ENCODE measurements at regions of chrX and their contacts with region 1.

Region 1: DNA sequence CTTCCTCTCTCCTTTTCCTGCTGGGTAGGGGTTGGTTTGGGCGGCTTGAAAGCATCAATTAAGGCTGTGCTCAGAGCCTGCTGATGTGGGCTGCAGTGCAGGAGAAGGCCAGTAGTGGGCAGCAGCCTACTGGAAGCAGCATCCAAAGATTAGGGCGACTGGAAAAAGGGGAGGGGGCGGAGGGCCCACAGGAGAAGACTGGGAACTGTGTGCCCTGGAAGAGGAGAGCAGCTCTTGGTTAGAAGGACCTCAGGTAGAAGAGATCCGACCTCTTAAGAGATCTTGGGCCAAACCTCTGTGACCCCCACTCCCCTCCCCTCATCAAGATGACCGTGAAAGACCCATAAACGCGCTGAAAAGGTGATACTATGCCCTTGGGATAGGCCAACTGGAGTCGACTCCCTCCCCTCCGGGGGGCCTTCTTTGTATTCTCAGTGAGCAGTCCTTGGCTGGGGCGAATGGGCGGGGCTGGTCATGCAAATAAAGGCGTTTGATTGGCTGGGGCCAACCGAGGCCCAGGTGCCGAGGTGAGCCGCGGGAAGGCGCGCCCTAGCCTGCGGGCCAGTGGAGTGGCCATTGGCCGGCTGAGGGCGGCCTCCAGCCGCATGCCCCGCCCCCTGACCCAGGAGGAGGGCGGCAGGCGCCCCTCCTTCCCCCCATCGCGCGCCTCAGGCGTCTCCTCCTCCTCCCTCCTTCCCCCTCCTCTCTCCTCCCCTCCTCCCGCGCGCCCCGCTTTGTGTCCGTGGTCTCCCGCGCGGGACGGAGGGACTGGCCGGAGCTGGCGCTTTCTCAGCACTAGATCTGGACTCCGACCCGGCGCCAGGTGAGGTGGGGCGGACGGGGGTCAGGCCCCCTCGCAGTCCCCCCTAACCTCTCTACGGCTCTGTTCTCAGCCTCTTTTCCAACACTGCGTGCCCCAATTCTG is 10.1 kb downstream of the DLG3 start:
- H3K4me3 Mint-ChIP-seq: peak overlapping the region; percentile 32
- H3K27ac Mint-ChIP-seq: no peak overlapping the region
- H3K4me1 Mint-ChIP-seq: peaks cover 28% of the 10 kb centered on the region
- H3K27me3 Mint-ChIP-seq: peaks cover 72% of the 10 kb centered on the region

Region 2: GRCh38 chrX:69506617-69507499 is 947.8 kb before region 1 on chrX:
- intact Hi-C with region 1: no loop called
- H3K4me3 Mint-ChIP-seq: no peak overlapping the region
- H3K27ac Mint-ChIP-seq: no peak overlapping the region
- H3K4me1 Mint-ChIP-seq: no peaks in the 10 kb centered on the region
- H3K27me3 Mint-ChIP-seq: peaks cover 47% of the 10 kb centered on the region

Region 3: DNA sequence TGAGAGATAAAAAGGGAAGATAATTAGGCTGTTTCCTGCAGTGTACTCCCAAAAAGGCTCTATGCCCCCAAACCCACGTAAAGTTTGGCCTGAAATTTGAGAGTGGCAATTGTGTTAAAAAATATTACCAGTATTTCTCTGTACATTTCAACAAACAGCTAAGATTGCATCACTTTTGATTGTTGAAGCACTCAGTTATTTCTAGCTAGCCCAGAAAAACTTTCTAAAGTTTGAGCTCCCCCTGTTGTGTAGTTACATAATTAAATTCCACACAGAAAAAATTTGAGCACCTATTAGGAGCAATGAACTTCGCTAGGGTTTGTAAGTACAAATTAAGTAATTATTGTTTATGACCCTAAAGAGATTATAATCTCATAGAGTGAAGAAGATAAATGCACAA is 99.4 kb after region 1 on chrX:
- intact Hi-C with region 1: loop called (anchors 10 kb)
- H3K4me3 Mint-ChIP-seq: no peak overlapping the region
- H3K27ac Mint-ChIP-seq: no peak overlapping the region
- H3K4me1 Mint-ChIP-seq: no peaks in the 10 kb centered on the region
- H3K27me3 Mint-ChIP-seq: peaks cover 4% of the 10 kb centered on the region

Region 4: GRCh38 chrX:70664726-70665125 is 210.0 kb after region 1 on chrX:
- intact Hi-C with region 1: loop called (anchors 5 kb)
- H3K4me3 Mint-ChIP-seq: no peak overlapping the region
- H3K27ac Mint-ChIP-seq: no peak overlapping the region
- H3K4me1 Mint-ChIP-seq: no peaks in the 10 kb centered on the region
- H3K27me3 Mint-ChIP-seq: no peaks in the 10 kb centered on the region

Region 5: DNA sequence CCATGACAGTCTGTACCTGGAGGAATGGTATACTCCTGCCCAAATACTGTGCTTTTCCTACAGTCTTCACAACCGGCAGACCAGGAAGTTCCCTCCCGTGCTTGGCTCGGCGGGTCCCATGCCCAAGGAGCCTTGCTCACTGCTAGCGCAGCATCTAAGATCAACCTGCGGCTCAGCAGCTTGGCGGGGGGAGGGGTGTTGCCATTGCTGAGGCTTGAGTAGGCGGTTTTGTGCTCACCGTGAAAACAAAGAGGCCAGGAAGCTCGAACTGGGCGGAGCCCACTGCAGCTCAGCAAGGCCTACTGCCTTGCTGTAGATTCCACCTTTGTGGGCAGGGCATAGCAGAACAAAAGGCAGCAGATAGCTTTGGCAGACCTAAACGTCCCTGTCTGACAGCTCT is 301.1 kb after region 1 on chrX:
- intact Hi-C with region 1: no loop called
- H3K4me3 Mint-ChIP-seq: no peak overlapping the region
- H3K27ac Mint-ChIP-seq: no peak overlapping the region
- H3K4me1 Mint-ChIP-seq: no peaks in the 10 kb centered on the region
- H3K27me3 Mint-ChIP-seq: peaks cover 2% of the 10 kb centered on the region

Measured in dendritic cell treated with granulocyte-macrophage colony-stimulating factor and Interleukin-4, amounts not matched to agents 40 ng/mL and 50 ng/mL, for 4 days (primary cell).